A673 (cell line): ENCODE measurements at regions of chr17 and their contacts with region 1.

Region 1: DNA sequence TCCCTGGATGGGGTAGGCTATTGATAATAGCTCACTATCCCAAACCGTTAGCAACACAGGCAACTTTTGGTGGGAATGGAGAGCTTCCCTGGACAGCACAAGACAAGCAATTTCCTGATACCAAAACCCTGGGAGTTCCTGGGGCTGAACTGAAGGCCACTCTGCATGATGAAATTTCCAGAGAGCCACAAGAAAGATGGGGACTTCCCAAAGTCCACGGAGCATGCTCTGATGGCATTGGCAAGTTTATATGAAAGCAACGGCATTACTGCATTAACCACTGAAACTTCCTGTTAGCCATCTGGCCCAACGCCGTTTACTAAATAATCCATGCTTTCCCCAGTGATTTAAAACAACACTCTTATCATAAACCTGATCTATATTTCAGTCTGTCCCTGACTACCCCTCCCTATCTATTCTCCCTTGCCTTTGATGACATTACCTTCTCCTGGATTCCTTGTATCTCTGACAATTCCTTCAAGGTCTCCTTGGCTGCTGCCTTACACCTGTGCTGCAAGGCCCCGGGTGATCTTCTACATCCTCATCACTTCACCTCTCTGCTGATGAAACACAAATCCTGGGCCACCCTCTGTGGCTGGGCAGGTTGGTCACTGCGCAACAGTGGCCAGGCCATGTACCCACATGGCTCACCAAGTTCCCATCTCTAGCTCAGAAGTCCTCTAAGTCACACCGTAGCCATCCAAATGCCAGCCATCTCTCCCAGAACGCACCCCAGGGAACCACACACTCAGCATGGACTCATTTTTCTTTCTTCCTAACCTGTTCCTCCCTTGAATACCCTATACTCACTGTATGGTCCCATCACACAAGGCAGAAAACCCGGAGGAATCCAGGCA is 108.5 kb upstream of the RCVRN start:
- DNase-seq: no peak
- H3K4me3 ChIP-seq: no peak overlapping the region
- H3K27ac ChIP-seq: no peak overlapping the region
- H3K4me1 ChIP-seq: no peaks in the 10 kb centered on the region
- H3K27me3 ChIP-seq: no peaks in the 10 kb centered on the region
- CTCF ChIP-seq: no peak

Region 2: DNA sequence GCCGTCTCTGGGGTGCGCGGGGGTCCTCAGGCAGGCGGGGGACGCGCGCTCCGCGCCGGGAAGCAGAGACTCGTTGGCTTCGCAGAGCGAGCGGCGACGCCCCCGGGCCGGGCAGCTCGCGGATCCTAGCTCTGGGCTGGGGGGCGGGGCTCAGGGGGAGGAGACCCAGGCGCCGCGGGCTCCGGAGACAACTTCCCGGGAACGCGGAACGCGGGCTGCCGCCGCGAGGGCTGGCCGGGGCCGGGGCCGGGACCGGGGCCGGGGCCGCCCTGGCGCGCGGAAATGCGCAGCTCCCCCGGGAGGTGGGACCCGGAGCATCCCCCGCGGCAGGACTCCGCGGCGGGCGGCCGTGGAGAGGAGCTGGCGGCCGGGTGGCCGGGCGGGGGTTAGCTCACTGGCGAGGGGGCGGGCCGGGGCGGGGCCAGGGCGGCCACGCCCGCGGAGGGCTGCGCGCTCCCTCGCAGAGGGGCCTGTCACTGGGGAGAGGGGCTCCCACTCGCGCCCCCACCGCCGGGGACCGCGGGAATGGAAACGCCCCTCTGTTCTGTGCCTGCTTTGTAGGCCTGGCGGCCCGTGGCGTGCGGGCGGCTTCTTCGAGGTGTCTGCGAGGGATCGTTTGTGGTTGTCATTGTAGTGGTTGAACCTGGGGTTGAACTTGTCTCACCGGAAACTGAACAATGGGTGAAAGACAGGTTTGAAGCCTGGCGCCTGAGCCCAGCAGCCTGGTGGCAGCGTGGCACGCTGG is 185.1 kb after region 1 on chr17 and contains the start of gene GAS7:
- CTCF ChIA-PET with region 1: no interaction called
- POLR2A ChIA-PET with region 1: interaction called, 12 read pairs
- intact Hi-C with region 1: no loop called
- DNase-seq: peak; percentile 63
- H3K4me3 ChIP-seq: peak within 1 kb of the TSS; percentile 49
- H3K27ac ChIP-seq: no peak within 1 kb of the TSS
- H3K4me1 ChIP-seq: peaks cover 5% of the 10 kb centered on the region
- H3K27me3 ChIP-seq: peaks cover 21% of the 10 kb centered on the region
- CTCF ChIP-seq: no peak
- total RNA-seq, gene GAS7: 2.3 and 2.8 TPM in 2 replicates